ENCODE measurements at regions of chrX and their contacts with region 1.

Region 1: GRCh38 chrX:25721564-25721963 is 416.6 kb upstream of the MAGEB18 start:
- DNase-seq: no peak
- ATAC-seq: no peak
- H3K4me3 ChIP-seq: no peak overlapping the region
- H3K27ac ChIP-seq: no peak overlapping the region
- H3K4me1 ChIP-seq: no peaks in the 10 kb centered on the region
- H3K27me3 ChIP-seq: no peaks in the 10 kb centered on the region
- CTCF ChIP-seq: peak; percentile 27; the same call in 1 of the 2 replicates
- POLR2A ChIP-seq: no peak
- RAD21 ChIP-seq: peak; percentile 42

Region 2: DNA sequence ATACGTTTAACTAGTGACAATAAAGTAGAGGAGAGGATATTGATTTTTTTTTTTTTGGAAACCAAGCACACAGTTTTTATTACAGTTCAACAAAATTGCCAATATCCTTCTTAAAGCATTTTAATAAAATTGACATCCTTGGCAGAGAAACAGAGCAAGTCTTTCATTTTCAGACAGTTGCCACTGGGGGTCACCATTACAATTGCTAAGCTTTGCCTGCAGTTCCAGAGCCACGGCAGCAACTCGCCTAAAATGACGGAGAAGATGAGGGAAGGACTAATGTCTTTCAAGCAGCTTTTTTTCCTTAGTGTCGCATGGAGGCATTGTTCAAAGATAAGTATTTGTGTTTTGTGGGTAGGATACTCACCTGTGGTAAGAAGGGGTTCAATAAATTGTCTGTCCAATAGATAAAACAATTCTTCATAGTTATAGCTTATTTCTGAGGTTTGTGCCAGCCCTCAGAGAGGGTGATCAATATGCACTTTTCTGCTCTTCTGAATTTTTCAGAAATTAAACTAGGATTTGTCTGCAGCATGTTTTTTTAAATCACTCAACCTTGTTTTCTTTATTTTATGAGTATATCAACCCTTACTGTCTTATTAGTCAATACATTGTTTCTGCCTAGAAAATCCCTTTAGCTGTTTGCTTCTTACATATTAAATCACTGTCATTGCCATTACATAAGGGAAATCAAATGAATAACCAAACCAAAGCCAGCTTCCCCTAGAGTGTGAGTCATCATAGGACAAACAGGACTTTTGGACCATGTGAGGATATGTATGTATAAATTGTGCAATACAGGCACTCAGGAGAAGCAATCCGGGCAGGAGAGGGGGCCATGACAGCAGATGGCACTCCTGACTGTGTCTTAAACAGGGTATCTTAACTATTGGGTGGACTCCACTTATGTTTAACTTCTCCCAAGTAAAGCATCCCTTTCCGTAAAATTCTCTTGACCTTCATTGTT is 197.7 kb before region 1 on chrX:
- CTCF ChIA-PET with region 1: no interaction called
- POLR2A ChIA-PET with region 1: no interaction called
- dilution Hi-C with region 1: no loop called
- in situ Hi-C with region 1: no loop called
- intact Hi-C with region 1: loop called (anchors 10 kb)
- DNase-seq: peak; percentile 36
- ATAC-seq: peak; percentile 56; the same call in 1 of the 2 replicates
- H3K4me3 ChIP-seq: no peak overlapping the region
- H3K27ac ChIP-seq: no peak overlapping the region
- H3K4me1 ChIP-seq: no peaks in the 10 kb centered on the region
- H3K27me3 ChIP-seq: no peaks in the 10 kb centered on the region
- CTCF ChIP-seq: peak; percentile 42
- POLR2A ChIP-seq: no peak
- RAD21 ChIP-seq: peak; percentile 57

Region 3: GRCh38 chrX:25805744-25806143 is 84.2 kb after region 1 on chrX:
- CTCF ChIA-PET with region 1: no interaction called
- POLR2A ChIA-PET with region 1: no interaction called
- dilution Hi-C with region 1: no loop called
- in situ Hi-C with region 1: no loop called
- intact Hi-C with region 1: no loop called
- DNase-seq: no peak
- ATAC-seq: no peak
- H3K4me3 ChIP-seq: no peak overlapping the region
- H3K27ac ChIP-seq: no peak overlapping the region
- H3K4me1 ChIP-seq: no peaks in the 10 kb centered on the region
- H3K27me3 ChIP-seq: no peaks in the 10 kb centered on the region
- CTCF ChIP-seq: no peak
- POLR2A ChIP-seq: no peak
- RAD21 ChIP-seq: no peak

Region 4: GRCh38 chrX:25925946-25926345 is 204.4 kb after region 1 on chrX:
- CTCF ChIA-PET with region 1: no interaction called
- POLR2A ChIA-PET with region 1: no interaction called
- dilution Hi-C with region 1: no loop called
- in situ Hi-C with region 1: no loop called
- intact Hi-C with region 1: no loop called
- DNase-seq: no peak
- ATAC-seq: no peak
- H3K4me3 ChIP-seq: no peak overlapping the region
- H3K27ac ChIP-seq: no peak overlapping the region
- H3K4me1 ChIP-seq: no peaks in the 10 kb centered on the region
- H3K27me3 ChIP-seq: no peaks in the 10 kb centered on the region
- CTCF ChIP-seq: no peak
- POLR2A ChIP-seq: no peak
- RAD21 ChIP-seq: no peak

Region 5: GRCh38 chrX:25941087-25941486 is 219.5 kb after region 1 on chrX:
- CTCF ChIA-PET with region 1: no interaction called
- POLR2A ChIA-PET with region 1: no interaction called
- dilution Hi-C with region 1: no loop called
- in situ Hi-C with region 1: no loop called
- intact Hi-C with region 1: no loop called
- DNase-seq: peak; percentile 7
- ATAC-seq: no peak
- H3K4me3 ChIP-seq: no peak overlapping the region
- H3K27ac ChIP-seq: no peak overlapping the region
- H3K4me1 ChIP-seq: no peaks in the 10 kb centered on the region
- H3K27me3 ChIP-seq: no peaks in the 10 kb centered on the region
- CTCF ChIP-seq: no peak
- POLR2A ChIP-seq: no peak
- RAD21 ChIP-seq: no peak

Region 6: DNA sequence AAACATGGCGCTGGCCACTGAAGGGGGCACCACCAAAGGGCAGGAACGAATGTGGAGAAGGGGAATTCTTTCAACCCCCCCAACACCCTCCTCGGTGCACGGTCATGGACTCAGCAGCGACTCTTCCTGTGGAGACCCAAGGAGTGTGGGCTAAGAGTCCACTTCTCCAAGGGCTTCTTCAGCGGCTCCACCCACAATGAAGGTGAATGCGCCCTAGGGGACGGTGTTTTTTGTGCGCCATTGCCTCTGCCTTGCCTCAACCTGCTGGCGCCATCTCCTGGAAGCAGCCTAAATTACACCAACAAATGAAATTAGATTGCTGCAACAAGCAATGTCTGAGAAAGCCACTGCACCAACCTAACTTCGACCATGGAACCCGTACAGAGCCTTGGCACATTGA is 247.4 kb after region 1 on chrX:
- CTCF ChIA-PET with region 1: no interaction called
- POLR2A ChIA-PET with region 1: no interaction called
- dilution Hi-C with region 1: no loop called
- in situ Hi-C with region 1: no loop called
- intact Hi-C with region 1: loop called (anchors 1 kb)
- DNase-seq: no peak
- ATAC-seq: no peak
- H3K4me3 ChIP-seq: no peak overlapping the region
- H3K27ac ChIP-seq: no peak overlapping the region
- H3K4me1 ChIP-seq: no peaks in the 10 kb centered on the region
- H3K27me3 ChIP-seq: no peaks in the 10 kb centered on the region
- CTCF ChIP-seq: 0 out of 2 replicates have a peak, but pooled peaks have one; percentile 21
- POLR2A ChIP-seq: no peak
- RAD21 ChIP-seq: peak; percentile 27; the same call in 1 of the 2 replicates